ENCODE measurements at regions of chr13 and their contacts with region 1.

Region 1: DNA sequence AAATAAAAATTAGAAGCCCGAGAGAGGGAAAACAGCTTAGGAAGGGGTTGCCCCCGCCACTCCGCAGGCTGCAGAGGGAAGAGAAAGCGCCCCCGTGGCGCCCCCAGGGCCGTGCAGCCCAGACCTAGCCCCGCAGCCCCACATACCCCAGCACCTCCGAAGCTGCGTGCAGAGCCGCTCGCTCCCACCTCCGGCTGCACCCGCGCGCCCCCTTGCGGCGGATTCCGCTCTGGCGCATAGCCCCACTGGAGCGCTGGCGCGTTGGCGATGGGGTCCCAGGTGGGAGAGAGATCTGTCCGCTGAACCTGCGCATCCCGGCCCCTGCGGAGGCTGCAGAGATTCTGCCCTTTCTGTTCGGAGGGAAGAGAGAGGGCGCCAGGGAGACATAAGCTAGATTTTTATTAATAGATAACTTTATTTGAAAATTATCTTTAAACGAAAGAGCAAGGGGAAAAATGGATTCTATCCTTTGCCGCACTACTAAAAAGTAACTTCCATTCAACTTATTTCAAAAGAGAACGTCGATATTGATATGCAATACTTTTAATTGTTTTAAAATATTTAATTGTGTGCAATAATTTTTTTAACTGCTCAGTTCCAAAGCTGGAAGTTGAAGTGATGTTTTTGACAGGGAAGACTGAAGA is 11.7 kb upstream of the CLN5 start:
- DNase-seq: peak; percentile 54 to 78 (median 76)
- H3K4me3 ChIP-seq: peak overlapping the region in 4 of 7 experiments; percentile 29 to 63 (median 44)
- H3K27ac ChIP-seq: no peak overlapping the region
- H3K4me1 ChIP-seq: peaks cover 0 to 14% (median 5%) of the 10 kb centered on the region in 4 experiments
- H3K27me3 ChIP-seq: peaks cover 0 to 13% (median 4%) of the 10 kb centered on the region in 5 experiments

Region 2: DNA sequence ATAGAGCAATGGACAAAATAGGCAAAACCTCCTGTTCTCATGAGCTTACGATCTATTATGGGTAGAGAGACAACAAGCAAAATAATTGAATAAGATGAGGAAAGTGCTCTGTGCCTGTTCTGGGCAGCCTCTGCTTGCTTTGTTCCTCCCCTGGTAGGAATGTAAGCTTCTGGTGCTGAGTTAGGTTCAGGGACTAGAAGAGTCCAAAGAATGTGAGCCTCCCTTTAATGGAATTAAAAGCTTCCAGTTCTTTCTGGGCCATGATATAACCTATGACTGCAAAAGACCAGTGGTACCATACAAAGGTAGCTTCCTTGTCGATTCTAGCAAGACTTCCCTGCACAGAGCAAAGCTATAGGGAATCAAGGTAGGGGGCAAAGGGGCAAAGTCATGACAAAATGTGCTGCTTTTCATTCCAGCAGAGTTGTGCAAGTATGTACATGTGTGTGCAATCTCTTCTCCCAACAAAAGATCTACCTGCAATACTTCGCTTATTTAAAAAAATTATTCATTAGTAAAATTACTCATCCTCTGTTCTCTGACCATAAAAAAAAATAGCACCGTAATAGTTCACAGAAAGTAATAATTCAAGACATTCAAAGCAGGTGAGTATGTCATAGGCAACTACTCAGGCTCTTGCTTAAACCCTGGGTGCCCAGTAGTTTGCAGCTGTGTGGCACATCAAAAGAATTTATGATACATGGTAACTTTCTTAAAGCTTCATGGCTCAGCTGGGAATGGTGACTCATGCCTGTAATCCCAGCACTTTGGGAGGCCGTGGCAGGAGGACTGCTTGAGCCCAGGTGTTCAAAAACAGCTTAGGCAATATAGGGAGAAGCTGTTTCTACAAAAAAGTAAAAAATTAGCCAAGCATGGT is 10.5 kb before region 1 on chr13:
- CTCF ChIA-PET with region 1: interaction called, 10 read pairs
- POLR2A ChIA-PET with region 1: no interaction called
- DNase-seq: no peak
- H3K4me3 ChIP-seq: no peak overlapping the region
- H3K27ac ChIP-seq: no peak overlapping the region
- H3K4me1 ChIP-seq: peaks cover 0 to 7% (median 4%) of the 10 kb centered on the region in 4 experiments
- H3K27me3 ChIP-seq: no peaks in the 10 kb centered on the region

Region 3: DNA sequence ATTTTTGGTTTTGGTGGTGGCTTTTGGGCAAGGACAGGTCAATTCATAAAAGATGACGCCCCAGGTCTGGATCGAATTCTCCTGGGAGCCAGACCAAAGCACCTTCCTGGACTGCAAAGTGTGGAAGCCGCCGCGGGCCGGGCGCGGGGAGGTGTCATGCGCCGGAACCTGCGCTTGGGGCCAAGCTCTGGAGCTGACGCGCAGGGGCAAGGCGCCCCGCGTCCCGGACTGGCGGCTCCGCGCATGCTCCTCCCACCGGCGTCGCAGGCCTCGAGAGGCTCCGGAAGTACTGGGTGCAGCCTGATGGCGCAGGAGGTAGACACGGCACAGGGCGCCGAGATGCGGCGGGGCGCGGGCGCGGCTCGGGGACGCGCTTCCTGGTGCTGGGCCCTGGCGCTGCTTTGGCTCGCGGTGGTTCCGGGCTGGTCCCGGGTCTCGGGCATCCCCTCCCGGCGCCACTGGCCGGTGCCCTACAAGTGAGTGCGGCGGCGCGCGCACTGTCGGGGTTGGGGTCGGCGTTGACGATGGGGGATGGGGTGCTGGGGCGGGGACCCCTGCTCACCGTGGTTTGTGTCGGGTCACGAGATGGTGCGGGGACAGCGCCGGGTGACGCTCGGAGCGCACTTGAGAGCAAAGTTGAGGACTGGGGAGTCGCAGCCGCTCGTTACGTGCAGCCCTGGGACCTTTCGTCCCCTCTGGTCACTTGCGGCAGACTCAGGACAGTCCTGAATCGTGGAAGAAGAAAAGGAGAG is 11.8 kb after region 1 on chr13 and contains the start of gene CLN5:
- CTCF ChIA-PET with region 1: interaction called, 41 read pairs
- POLR2A ChIA-PET with region 1: interaction called, 4 read pairs
- DNase-seq: peak; percentile 96 to 98 (median 98)
- H3K4me3 ChIP-seq: peak within 1 kb of the TSS; percentile 62 to 99 (median 91)
- H3K27ac ChIP-seq: peak within 1 kb of the TSS; percentile 47 to 82
- H3K4me1 ChIP-seq: peaks cover 0 to 25% (median 13%) of the 10 kb centered on the region in 4 experiments
- H3K27me3 ChIP-seq: no peaks in the 10 kb centered on the region

Region 4: GRCh38 chr13:77002590-77003190 is 22.5 kb after region 1 on chr13:
- CTCF ChIA-PET with region 1: interaction called, 12 read pairs
- POLR2A ChIA-PET with region 1: no interaction called
- DNase-seq: peak in 2 of 3 donors; percentile 45 to 48
- H3K4me3 ChIP-seq: no peak overlapping the region
- H3K27ac ChIP-seq: no peak overlapping the region
- H3K4me1 ChIP-seq: peaks cover 3 to 26% (median 7%) of the 10 kb centered on the region in 4 experiments
- H3K27me3 ChIP-seq: no peaks in the 10 kb centered on the region

Region 5: DNA sequence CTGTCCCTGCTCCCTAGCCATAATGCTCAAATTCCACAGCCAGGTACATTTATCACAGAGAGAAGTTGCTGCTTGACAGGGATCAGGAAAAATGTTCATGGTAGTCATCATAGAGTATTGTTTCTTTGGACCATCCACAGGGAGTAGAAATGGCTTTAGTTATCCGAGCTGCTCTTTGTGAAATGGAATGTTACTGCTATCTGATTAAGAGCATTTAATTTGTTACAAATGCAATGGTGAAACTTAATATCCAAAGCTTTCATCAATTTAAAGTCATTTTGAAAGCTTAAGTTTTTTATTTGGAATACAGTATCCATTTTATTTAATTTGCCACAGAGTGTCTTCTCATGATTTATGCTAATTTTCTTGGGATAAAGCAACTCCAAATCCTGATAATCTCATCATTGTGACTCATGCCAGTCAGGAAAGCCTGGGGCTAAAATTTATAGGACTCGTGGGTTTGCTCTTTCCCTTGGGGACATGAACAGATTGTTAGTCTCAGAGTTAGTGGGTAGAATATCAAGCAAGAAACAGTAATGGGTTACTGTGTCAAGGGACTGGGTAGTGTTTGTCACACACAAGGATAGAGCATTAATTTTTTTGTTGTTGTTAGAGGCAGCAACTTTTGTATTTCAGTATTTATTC is 615.1 kb after region 1 on chr13:
- CTCF ChIA-PET with region 1: no interaction called
- POLR2A ChIA-PET with region 1: no interaction called
- DNase-seq: no peak
- H3K4me3 ChIP-seq: no peak overlapping the region
- H3K27ac ChIP-seq: no peak overlapping the region
- H3K4me1 ChIP-seq: no peaks in the 10 kb centered on the region
- H3K27me3 ChIP-seq: no peaks in the 10 kb centered on the region